Activated CD4-positive, alpha-beta T cell treated with anti-CD3 and anti-CD28 coated beads for 36 hours (primary cell): ENCODE measurements at regions of chr2 and their contacts with region 1.

Region 1: DNA sequence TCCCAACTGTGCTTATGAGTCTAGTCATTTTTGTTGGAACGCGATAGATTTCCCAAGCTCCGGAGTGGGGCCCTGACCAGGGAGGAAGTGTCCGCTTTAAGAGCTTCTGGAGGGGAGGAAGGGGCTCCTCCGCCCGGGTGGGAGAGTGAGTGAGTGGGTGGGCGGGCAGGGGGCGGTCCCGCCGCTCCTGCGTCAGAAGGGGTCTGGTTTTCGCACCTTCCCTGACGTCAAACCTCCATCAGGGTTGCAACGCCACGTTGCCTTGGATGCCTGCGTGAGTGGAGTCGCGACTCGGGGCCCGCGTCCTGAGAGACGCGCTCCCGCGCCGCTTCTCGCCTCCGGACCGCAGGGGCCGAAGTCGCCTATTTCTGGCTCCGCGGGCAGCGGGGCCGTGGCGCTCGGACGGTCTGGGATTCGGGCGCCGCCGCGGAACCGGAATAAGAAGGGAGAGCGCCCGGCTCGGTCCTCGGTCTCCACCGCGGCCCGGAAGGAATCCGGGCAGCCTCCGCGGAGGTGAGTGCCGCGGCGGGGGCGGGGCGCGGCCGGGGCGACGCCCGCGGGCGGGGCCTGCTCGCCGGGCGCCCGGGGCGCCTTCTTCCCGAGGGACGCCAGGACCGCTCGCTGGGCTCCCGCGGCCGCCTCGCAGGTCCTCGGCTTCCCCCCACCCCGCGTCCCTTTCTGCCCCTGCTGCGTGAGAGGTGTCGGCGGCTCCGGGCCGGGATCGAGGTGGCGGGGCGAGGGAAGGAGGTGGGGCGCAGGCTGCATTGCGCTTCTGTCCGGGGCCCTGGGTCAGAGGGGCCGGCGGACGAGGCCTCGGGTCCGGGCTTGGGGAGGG is at the start of gene ZDBF2:
- DNase-seq: peak; percentile 73
- ATAC-seq: peak; percentile 81
- H3K4me3 Mint-ChIP-seq: peak within 1 kb of the TSS; percentile 84
- H3K27ac Mint-ChIP-seq: peak within 1 kb of the TSS; percentile 90
- H3K4me1 Mint-ChIP-seq: peaks cover 16% of the 10 kb centered on the region
- H3K27me3 Mint-ChIP-seq: peaks cover 43% of the 10 kb centered on the region
- total RNA-seq, gene ZDBF2: 11.7 to 13.4 TPM

Region 2: DNA sequence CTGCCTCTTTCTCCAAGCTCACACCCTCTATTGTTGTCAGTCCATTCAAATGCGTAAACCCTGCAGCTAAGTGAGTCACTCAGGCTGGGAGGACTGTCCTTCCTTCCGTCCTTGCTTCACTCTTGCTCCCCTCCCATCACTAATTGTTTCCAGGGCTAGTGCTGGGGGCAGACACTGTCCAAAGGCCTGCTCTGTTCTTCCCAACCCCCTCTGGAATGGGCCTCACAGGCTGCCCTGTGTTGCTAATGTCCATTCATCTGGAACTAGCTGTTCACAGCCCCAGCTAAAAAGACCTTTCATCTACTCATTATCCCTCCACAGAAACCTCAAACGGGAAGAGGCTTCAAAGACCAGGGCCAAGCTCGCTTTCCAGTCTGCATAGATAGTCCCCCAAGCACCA is 624.2 kb before region 1 on chr2:
- CTCF ChIA-PET with region 1: no interaction called
- POLR2A ChIA-PET with region 1: no interaction called
- intact Hi-C with region 1: no loop called
- DNase-seq: no peak
- ATAC-seq: no peak
- H3K4me3 Mint-ChIP-seq: no peak overlapping the region
- H3K27ac Mint-ChIP-seq: no peak overlapping the region
- H3K4me1 Mint-ChIP-seq: peaks cover 2% of the 10 kb centered on the region
- H3K27me3 Mint-ChIP-seq: no peaks in the 10 kb centered on the region

Region 3: DNA sequence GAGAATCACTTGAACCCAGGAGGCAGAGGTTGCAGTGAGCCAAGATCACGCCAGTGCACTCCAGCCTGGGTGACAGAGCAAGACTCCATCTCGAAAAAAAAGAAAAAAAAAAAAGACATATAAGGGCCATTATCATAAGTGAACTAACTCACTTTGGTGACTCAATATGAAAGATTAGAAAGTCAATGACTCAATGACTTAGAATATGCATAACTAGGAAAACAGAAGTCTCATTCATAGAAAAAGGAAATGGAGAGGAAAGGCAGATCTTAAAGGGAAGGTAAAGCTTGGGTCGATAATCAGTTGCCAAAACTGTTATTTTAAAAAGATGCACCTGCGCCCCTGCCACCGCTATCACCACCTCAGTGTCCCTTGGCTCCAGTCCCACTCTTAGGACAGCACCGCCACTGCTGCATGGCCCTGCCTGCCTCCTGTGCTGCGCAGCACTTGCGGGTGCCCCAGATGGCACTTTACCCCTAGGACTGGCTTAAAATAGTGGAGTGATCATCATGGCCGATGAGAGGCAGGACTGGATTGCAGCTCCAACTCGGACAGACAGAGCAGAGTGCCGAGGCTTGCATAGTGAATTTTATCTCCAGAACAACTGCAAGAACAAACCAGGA is 243.4 kb before region 1 on chr2:
- CTCF ChIA-PET with region 1: no interaction called
- POLR2A ChIA-PET with region 1: no interaction called
- intact Hi-C with region 1: loop called in 1 of 2 experiments (anchors 5 kb)
- DNase-seq: peak; percentile 19
- ATAC-seq: peak; percentile 96
- H3K4me3 Mint-ChIP-seq: no peak overlapping the region
- H3K27ac Mint-ChIP-seq: peak overlapping the region; percentile 21
- H3K4me1 Mint-ChIP-seq: peaks cover 64% of the 10 kb centered on the region
- H3K27me3 Mint-ChIP-seq: no peaks in the 10 kb centered on the region

Region 4: GRCh38 chr2:206085742-206086445 is 188.8 kb before region 1 on chr2 and contains the start of gene INO80D:
- CTCF ChIA-PET with region 1: no interaction called
- POLR2A ChIA-PET with region 1: no interaction called
- intact Hi-C with region 1: loop called in 1 of 2 experiments (anchors 2 kb)
- DNase-seq: peak; percentile 89
- ATAC-seq: peak; percentile 96
- H3K4me3 Mint-ChIP-seq: peak within 1 kb of the TSS; percentile 96
- H3K27ac Mint-ChIP-seq: peak within 1 kb of the TSS; percentile 99
- H3K4me1 Mint-ChIP-seq: peaks cover 28% of the 10 kb centered on the region
- H3K27me3 Mint-ChIP-seq: no peaks in the 10 kb centered on the region
- total RNA-seq, gene INO80D: 17.6 to 18.9 TPM

Region 5: DNA sequence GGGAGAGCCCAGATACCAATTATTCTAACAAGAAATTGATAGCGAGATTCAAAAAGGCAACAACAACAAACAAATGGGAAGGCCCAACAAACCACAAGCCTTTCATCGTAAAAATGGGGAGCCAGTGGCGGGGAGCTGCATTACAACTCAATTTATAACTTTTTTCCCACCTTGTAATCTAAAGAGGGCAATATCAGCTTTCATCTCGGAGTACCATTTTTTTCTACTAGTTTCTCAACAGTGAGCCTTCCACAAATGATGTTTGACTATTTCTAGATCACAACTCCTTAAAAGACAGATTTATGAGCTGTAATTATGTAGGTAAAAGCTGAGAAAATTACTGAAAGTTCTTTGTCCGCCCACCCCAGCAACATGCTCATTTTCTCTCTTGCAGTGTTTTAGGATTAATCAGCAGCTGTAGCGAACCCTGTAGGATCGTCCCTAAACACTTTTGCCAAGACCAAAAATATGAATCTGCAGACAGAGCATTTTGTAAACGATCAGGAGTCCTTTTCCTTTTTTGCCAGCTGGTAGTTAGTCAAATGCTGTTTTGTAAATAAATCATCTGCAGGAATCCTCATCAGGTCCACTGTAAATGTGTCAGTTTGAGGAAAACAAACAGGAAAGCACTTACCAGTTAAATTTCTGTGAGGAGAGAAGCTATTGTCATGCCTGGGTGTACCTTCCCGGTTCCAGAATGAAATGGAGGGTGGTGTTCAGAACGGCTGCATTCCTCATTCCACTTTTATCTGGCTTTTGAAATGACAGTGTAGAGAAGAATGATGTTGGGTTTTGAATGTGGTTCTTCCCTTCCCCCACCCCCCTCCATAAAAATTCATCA is 61.8 kb before region 1 on chr2:
- CTCF ChIA-PET with region 1: no interaction called
- POLR2A ChIA-PET with region 1: no interaction called
- intact Hi-C with region 1: no loop called
- DNase-seq: no peak
- ATAC-seq: no peak
- H3K4me3 Mint-ChIP-seq: no peak overlapping the region
- H3K27ac Mint-ChIP-seq: no peak overlapping the region
- H3K4me1 Mint-ChIP-seq: peaks cover 6% of the 10 kb centered on the region
- H3K27me3 Mint-ChIP-seq: peaks cover 8% of the 10 kb centered on the region

Region 6: DNA sequence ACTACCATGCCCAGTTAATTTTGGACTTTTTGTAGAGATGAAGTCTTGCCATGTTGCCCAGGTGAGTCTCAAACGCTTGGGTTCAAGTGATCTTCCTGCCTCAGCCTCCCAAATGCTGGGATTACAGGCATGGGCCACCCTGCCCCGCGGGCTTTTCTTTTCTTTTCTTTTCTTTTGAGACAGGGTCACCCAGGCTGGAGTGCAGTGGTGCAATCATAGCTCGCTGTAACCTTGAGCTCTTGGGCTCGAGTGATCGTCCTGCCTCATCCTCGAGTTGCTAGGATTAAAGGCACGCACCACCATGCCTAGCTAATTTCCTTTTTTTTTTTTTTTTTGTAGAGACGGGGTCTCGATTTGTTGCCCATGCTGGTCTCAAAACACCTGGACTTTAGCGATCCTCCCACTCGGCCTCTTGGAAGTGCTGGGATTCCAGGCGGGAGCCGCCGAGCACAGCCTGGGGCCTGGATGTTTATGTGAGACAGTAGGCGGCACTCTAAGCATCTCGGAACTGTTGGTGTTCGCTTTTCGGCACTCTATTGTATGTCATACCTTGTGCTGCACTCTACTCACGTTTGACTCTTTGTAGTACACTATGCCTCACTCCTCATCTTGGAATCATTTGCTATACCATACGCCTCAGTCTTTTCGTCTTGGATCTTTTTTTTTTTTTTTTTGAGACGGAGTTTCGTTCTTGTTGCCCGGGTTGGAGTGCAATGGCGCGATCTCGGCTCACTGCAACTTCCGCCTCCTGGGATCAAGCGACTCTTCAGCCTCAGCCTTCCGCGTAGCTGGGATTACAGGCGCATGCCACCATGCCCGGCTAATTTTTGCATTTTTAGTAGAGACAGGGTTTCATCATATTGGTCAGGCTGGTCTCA is 24.7 kb before region 1 on chr2:
- CTCF ChIA-PET with region 1: no interaction called
- POLR2A ChIA-PET with region 1: no interaction called
- intact Hi-C with region 1: loop called in 1 of 2 experiments (anchors 2 kb)
- DNase-seq: peak; percentile 30
- ATAC-seq: peak; percentile 60
- H3K4me3 Mint-ChIP-seq: peak overlapping the region; percentile 69
- H3K27ac Mint-ChIP-seq: no peak overlapping the region
- H3K4me1 Mint-ChIP-seq: peaks cover 5% of the 10 kb centered on the region
- H3K27me3 Mint-ChIP-seq: peaks cover 40% of the 10 kb centered on the region

Region 7: GRCh38 chr2:206442833-206443734 is 168.4 kb after region 1 on chr2 and contains the start of gene ADAM23:
- CTCF ChIA-PET with region 1: no interaction called
- POLR2A ChIA-PET with region 1: no interaction called
- intact Hi-C with region 1: loop called in 1 of 2 experiments (anchors 2 kb)
- DNase-seq: peak; percentile 78
- ATAC-seq: peak; percentile 84
- H3K4me3 Mint-ChIP-seq: peak within 1 kb of the TSS; percentile 77
- H3K27ac Mint-ChIP-seq: no peak within 1 kb of the TSS
- H3K4me1 Mint-ChIP-seq: peaks cover 13% of the 10 kb centered on the region
- H3K27me3 Mint-ChIP-seq: peaks cover 57% of the 10 kb centered on the region
- total RNA-seq, gene ADAM23: 1.1 to 1.3 TPM

Region 8: DNA sequence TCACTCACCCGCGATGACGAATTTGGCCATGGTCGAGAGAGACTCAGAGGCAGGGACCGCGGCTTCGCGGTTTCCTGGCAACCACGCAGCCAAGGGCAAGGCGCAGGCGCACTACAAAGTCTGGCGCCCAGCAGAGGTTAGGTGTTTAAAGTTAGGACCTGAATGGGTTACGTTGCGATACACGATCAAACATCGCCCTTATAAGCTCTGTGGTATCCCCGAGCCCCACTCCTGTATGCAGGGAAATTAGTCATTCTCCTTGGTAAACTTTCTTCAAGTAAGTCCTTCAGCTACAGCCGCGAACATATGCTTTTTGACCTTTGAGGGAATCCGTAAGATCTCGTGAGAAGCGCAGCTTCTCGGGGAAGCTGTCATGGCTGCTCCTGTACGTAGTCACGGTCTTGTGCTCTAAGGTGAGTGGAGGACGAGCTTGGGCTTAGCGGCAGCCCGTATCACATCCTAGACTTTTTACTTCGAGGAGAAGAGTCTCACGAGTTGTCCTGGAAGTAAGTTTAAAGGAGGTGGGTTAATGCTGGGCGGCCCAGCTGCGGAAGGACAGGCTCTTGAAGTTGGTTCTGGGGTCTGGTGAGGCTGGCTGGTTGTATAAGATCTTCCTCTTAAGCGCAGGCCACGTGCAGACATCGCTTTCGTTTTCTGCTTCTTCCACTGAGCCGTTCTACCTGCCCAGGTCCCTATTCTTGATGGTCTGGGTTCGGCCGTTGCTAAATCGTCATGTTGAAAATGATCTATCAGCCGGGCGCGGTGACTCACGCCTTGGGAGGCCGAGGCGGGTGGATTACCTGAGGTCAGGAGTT is 490.8 kb after region 1 on chr2 and contains the starts of genes FASTKD2 and MDH1B:
- CTCF ChIA-PET with region 1: no interaction called
- POLR2A ChIA-PET with region 1: no interaction called
- intact Hi-C with region 1: loop called in 1 of 2 experiments (anchors 5 kb)
- DNase-seq: peak; percentile 93
- ATAC-seq: peak; percentile 87
- H3K4me3 Mint-ChIP-seq: peak within 1 kb of the TSS; percentile 93
- H3K27ac Mint-ChIP-seq: peak within 1 kb of the TSS; percentile 98
- H3K4me1 Mint-ChIP-seq: peaks cover 37% of the 10 kb centered on the region
- H3K27me3 Mint-ChIP-seq: no peaks in the 10 kb centered on the region
- total RNA-seq, gene FASTKD2: 33.9 to 37.0 TPM
- total RNA-seq, gene MDH1B: 0.83 to 1.3 TPM